CD4-positive, alpha-beta memory T cell (primary cell): ENCODE measurements at regions of chr4 and their contacts with region 1.

Region 1: GRCh38 chr4:87235020-87235671 is 14.7 kb upstream of the KLHL8 start:
- DNase-seq: no peak
- H3K4me3 ChIP-seq: peak overlapping the region in 1 of 2 donors; percentile 47
- H3K4me3 Mint-ChIP-seq: peak overlapping the region in 6 of 8 donors; percentile 80 to 92 (median 84)
- H3K27ac ChIP-seq: no peak overlapping the region
- H3K27ac Mint-ChIP-seq: peak overlapping the region in 2 of 7 donors; percentile 1 to 50
- H3K4me1 ChIP-seq: peaks cover 5% of the 10 kb centered on the region
- H3K4me1 Mint-ChIP-seq: peaks cover 0 to 7% (median under 1%) of the 10 kb centered on the region in 4 donors
- H3K27me3 ChIP-seq: peaks cover 4% of the 10 kb centered on the region
- H3K27me3 Mint-ChIP-seq: peaks cover 2 to 6% of the 10 kb centered on the region in 2 donors

Region 2: GRCh38 chr4:87144356-87144755 is 90.8 kb before region 1 on chr4:
- CTCF ChIA-PET with region 1: interaction called, 108 read pairs
- POLR2A ChIA-PET with region 1: no interaction called
- intact Hi-C with region 1: no loop called
- DNase-seq: no peak
- H3K4me3 ChIP-seq: no peak overlapping the region
- H3K4me3 Mint-ChIP-seq: no peak overlapping the region
- H3K27ac ChIP-seq: no peak overlapping the region
- H3K27ac Mint-ChIP-seq: peak overlapping the region in 1 of 7 donors; percentile 38
- H3K4me1 ChIP-seq: no peaks in the 10 kb centered on the region
- H3K4me1 Mint-ChIP-seq: peaks cover 0 to 3% (median under 1%) of the 10 kb centered on the region in 4 donors
- H3K27me3 ChIP-seq: no peaks in the 10 kb centered on the region
- H3K27me3 Mint-ChIP-seq: no peaks in the 10 kb centered on the region